ENCODE measurements at regions of chr22 and their contacts with region 1.

Region 1: DNA sequence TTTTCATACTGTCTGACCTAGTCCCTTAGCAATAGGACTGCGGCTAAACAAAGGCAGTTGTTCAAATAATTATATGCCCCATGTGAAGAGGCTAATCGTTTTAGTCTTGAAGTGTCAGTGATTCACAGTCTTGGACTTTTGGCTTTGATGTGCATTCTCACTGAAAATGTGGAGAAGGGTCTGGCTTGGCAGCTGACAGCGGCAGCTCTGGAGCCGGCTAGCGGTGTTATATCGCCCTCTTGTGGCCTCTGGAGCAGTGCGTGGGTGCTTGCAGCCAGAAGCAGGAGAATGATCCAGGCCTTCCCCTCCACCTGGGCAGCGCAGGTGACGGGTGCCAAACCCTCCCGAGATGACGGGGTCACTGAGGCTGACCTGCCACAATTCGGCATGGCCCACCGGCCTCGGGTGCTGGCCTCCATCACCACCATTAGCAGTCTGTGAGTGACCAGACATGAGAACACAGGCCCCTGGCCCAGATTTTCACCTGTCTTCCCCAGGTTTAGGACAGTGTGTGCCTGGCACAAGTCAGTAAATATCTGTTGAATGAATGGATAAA is 90.3 kb upstream of the PITPNB start:
- DNase-seq: peak; percentile 68 to 72
- H3K4me3 ChIP-seq: no peak overlapping the region
- H3K27ac ChIP-seq: no peak overlapping the region
- H3K4me1 ChIP-seq: peaks cover 11% of the 10 kb centered on the region
- H3K27me3 ChIP-seq: no peaks in the 10 kb centered on the region
- CTCF ChIP-seq: peak; percentile 91

Region 2: DNA sequence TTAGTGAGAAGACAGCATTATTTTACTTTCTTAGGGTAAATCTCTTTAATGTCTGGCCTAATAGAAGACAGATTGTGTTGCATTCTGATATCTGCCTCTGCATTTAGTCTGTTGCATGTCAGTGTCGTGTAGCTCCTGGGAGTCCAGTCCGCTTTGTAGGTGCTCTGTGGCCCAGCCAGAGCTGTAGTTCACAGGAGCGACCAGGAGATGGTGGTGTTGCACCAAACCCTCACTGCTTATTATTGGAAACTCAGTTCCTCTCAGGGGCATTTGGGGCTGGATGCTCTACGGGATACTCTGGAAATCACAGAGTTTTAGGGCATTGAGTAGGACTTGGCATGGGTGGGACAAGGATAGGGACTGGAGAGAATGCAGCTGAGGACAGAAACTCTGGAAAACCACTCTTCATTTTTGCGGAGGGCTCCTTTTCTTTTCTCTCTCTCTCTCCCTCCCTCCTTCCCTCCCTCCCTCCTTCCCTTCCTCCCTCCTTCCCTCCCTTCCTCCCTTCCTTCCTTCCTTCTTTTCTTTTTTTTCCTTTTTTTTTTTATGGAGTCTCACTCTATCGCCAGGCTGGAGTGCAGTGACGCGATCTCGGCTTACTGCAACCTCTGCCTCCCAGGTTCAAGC is 1330.2 kb before region 1 on chr22:
- CTCF ChIA-PET with region 1: no interaction called
- POLR2A ChIA-PET with region 1: no interaction called
- intact Hi-C with region 1: loop called (anchors 5 kb)
- DNase-seq: peak; percentile 57 to 60
- H3K4me3 ChIP-seq: no peak overlapping the region
- H3K27ac ChIP-seq: no peak overlapping the region
- H3K4me1 ChIP-seq: peaks cover 8% of the 10 kb centered on the region
- H3K27me3 ChIP-seq: no peaks in the 10 kb centered on the region
- CTCF ChIP-seq: peak; percentile 90

Region 3: GRCh38 chr22:26756675-26757293 is 1252.6 kb before region 1 on chr22:
- CTCF ChIA-PET with region 1: no interaction called
- POLR2A ChIA-PET with region 1: no interaction called
- intact Hi-C with region 1: loop called (anchors 2 kb)
- DNase-seq: peak in 1 of 2 experiments; percentile 13
- H3K4me3 ChIP-seq: no peak overlapping the region
- H3K27ac ChIP-seq: no peak overlapping the region
- H3K4me1 ChIP-seq: no peaks in the 10 kb centered on the region
- H3K27me3 ChIP-seq: no peaks in the 10 kb centered on the region
- CTCF ChIP-seq: peak; percentile 91

Region 4: GRCh38 chr22:27880778-27881394 is 128.5 kb before region 1 on chr22:
- CTCF ChIA-PET with region 1: no interaction called
- POLR2A ChIA-PET with region 1: no interaction called
- intact Hi-C with region 1: loop called (anchors 1 kb)
- DNase-seq: peak; percentile 18 to 42
- H3K4me3 ChIP-seq: no peak overlapping the region
- H3K27ac ChIP-seq: no peak overlapping the region
- H3K4me1 ChIP-seq: no peaks in the 10 kb centered on the region; the same call in 1 of the 2 replicates
- H3K27me3 ChIP-seq: no peaks in the 10 kb centered on the region
- CTCF ChIP-seq: peak; percentile 79

Region 5: GRCh38 chr22:27885977-27886842 is 123.1 kb before region 1 on chr22:
- CTCF ChIA-PET with region 1: interaction called, 3 read pairs
- POLR2A ChIA-PET with region 1: no interaction called
- intact Hi-C with region 1: loop called (anchors 1 kb)
- DNase-seq: peak; percentile 9 to 70
- H3K4me3 ChIP-seq: no peak overlapping the region
- H3K27ac ChIP-seq: no peak overlapping the region
- H3K4me1 ChIP-seq: peaks cover 7% of the 10 kb centered on the region
- H3K27me3 ChIP-seq: no peaks in the 10 kb centered on the region
- CTCF ChIP-seq: peak; percentile 96

Region 6: DNA sequence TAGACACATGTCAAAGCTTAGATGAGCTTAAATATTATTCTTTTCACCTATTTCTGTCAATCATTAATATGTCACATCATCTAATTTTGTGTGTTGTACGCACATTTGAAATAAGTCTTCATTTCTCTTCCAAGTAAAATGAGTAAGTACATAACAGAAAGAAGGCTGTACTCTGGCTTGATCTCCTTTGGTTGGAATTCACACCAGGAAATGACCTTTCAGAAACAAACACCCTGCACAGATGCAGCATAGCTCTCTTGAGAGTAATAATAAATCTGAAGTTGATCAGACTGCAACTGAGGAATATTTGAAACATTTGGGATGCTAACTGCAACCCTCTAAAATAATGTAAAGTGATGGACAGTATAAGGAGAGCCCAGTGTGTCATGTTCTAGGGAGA is 404.7 kb after region 1 on chr22:
- CTCF ChIA-PET with region 1: no interaction called
- POLR2A ChIA-PET with region 1: no interaction called
- intact Hi-C with region 1: no loop called
- DNase-seq: no peak
- H3K4me3 ChIP-seq: no peak overlapping the region
- H3K27ac ChIP-seq: no peak overlapping the region
- H3K4me1 ChIP-seq: no peaks in the 10 kb centered on the region
- H3K27me3 ChIP-seq: no peaks in the 10 kb centered on the region
- CTCF ChIP-seq: no peak

Measured in PC-9 (cell line).